Panc1 (cell line): ENCODE measurements at regions of chr7 and their contacts with region 1.

Region 1: GRCh38 chr7:57404343-57404953 is 45.5 kb upstream of the ZNF716 start:
- DNase-seq: no peak
- ATAC-seq: no peak
- H3K4me3 ChIP-seq: no peak overlapping the region; a peak in 1 of 4 replicates
- H3K27ac ChIP-seq: no peak overlapping the region
- H3K4me1 ChIP-seq: no peaks in the 10 kb centered on the region
- H3K27me3 ChIP-seq: no peaks in the 10 kb centered on the region
- CTCF ChIP-seq: no peak

Region 2: DNA sequence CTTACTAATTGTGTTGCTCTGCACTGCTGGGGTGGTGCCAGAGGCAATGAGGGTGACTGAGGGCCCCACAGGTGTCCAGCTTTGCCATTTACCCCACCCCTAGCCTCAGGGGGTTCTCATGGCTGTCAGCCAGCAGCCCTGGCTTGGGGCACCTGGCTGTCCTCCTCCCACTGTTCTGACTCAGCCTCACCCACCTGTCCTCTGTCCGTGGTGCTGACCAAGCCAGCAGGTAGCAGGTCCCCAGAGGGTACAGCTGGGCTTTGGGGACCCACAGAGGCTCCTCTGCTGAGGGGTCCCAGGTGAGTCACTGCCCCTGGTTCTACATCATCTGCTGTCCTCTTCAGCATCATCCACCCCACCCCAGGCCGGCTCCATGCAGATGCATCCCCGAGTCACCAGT is 13.3 kb after region 1 on chr7:
- CTCF ChIA-PET with region 1: no interaction called
- POLR2A ChIA-PET with region 1: no interaction called
- in situ Hi-C with region 1: no loop called
- intact Hi-C with region 1: loop called (anchors 1 kb)
- DNase-seq: no peak
- ATAC-seq: no peak
- H3K4me3 ChIP-seq: no peak overlapping the region
- H3K27ac ChIP-seq: no peak overlapping the region
- H3K4me1 ChIP-seq: no peaks in the 10 kb centered on the region
- H3K27me3 ChIP-seq: no peaks in the 10 kb centered on the region
- CTCF ChIP-seq: no peak